MCF 10A (cell line): ENCODE measurements at regions of chr18 and their contacts with region 1.

Region 1: GRCh38 chr18:46281185-46282176 is 177.3 kb downstream of the HAUS1 start:
- DNase-seq: peak; percentile 81
- H3K4me3 Mint-ChIP-seq: no peak overlapping the region
- H3K27ac Mint-ChIP-seq: no peak overlapping the region
- H3K4me1 Mint-ChIP-seq: peaks cover 25% of the 10 kb centered on the region
- H3K27me3 Mint-ChIP-seq: no peaks in the 10 kb centered on the region
- CTCF ChIP-seq: peak; percentile 89

Region 2: DNA sequence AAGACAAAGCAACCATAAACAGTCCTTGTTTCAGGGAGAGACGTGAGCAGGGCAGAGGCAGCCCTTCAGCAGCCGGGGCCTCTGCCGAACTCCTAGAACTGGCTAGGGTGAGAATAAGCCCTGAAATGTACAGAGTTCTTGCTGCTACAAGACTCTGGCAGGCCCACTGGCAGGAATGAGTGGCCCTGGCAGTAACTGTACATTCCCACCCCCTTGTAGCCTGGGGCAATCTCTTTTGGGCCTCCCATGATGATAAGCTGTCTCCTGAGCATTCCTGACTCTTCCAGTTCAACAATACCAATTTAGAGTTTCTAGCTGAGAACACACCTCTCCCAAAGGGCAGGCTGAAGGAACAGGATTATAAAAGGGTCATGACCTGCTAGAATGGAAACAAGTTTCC is 123.0 kb before region 1 on chr18:
- CTCF ChIA-PET with region 1: interaction called, 12 read pairs
- POLR2A ChIA-PET with region 1: no interaction called
- intact Hi-C with region 1: no loop called
- DNase-seq: peak; percentile 61
- H3K4me3 Mint-ChIP-seq: no peak overlapping the region
- H3K27ac Mint-ChIP-seq: no peak overlapping the region
- H3K4me1 Mint-ChIP-seq: peaks cover 15% of the 10 kb centered on the region
- H3K27me3 Mint-ChIP-seq: no peaks in the 10 kb centered on the region
- CTCF ChIP-seq: no peak

Region 3: GRCh38 chr18:46324087-46324958 is 42.8 kb after region 1 on chr18:
- CTCF ChIA-PET with region 1: interaction called, 5 read pairs
- POLR2A ChIA-PET with region 1: no interaction called
- intact Hi-C with region 1: loop called (anchors 2 kb)
- DNase-seq: peak; percentile 79
- H3K4me3 Mint-ChIP-seq: peak overlapping the region; percentile 48
- H3K27ac Mint-ChIP-seq: peak overlapping the region; percentile 67
- H3K4me1 Mint-ChIP-seq: peaks cover 36% of the 10 kb centered on the region
- H3K27me3 Mint-ChIP-seq: no peaks in the 10 kb centered on the region
- CTCF ChIP-seq: no peak

Region 4: DNA sequence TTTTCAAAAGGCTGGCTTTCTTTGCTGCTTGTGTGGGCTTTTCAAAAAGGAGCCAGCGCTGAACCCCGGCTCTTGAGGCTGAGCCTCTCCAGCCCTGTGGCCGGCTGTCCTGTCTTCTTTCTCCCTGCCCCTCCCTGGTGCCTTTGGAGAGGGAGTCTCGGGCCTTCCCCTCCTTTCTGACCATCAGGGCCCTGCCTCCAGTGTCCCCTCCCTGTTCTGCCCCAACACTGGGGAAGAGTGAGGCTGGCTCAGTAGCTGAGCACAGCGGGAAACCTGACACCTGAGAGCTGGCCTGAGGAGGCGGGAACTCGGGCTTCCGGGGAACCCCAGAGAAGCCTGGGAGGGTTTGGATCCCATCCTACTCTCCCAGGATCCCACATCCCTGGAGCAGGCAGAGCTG is 143.4 kb after region 1 on chr18:
- CTCF ChIA-PET with region 1: no interaction called
- POLR2A ChIA-PET with region 1: no interaction called
- intact Hi-C with region 1: loop called (anchors 10 kb)
- DNase-seq: peak; percentile 63
- H3K4me3 Mint-ChIP-seq: no peak overlapping the region
- H3K27ac Mint-ChIP-seq: no peak overlapping the region
- H3K4me1 Mint-ChIP-seq: peaks cover 22% of the 10 kb centered on the region
- H3K27me3 Mint-ChIP-seq: no peaks in the 10 kb centered on the region
- CTCF ChIP-seq: no peak

Region 5: DNA sequence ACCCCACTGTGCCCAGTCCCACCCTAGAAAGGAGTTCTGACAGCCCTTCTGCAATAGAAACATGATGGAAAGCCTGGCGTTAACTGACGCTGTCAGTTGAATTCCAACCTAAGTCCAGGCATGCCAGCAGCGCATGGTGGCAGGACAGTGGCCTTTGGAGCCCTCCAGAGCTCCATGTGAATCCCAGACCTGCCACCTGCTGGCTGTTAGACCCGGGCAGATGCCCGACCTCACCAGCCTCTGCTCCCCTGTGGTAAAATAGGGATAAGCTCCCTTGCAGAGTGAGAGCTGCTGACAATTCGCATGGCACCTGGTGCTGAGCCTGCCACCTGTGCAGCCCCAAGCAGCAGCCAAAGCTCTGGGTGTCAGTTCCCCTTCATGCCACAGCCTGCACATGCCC is 237.0 kb after region 1 on chr18:
- CTCF ChIA-PET with region 1: interaction called, 20 read pairs
- POLR2A ChIA-PET with region 1: no interaction called
- intact Hi-C with region 1: loop called (anchors 1 kb)
- DNase-seq: peak; percentile 38
- H3K4me3 Mint-ChIP-seq: no peak overlapping the region
- H3K27ac Mint-ChIP-seq: no peak overlapping the region
- H3K4me1 Mint-ChIP-seq: no peaks in the 10 kb centered on the region
- H3K27me3 Mint-ChIP-seq: peaks cover 91% of the 10 kb centered on the region
- CTCF ChIP-seq: no peak

Region 6: DNA sequence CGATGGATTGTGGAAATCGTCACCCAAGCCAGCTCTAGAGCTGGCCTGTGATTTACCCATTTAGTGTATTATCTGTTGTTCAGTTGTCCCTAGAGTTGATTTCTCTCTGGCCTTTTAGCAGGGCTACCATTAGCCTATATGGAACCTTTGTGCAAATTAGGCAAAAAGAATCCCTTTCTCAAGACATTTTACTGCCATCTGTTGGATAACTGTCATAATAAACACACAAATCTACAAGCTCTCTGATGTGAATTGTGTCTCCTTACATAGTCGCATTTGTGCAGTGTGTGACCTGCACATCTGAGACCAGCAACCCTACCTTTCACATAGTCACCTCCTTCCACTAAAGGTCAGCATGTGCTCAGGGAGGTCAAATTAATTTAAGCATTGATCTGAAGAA is 341.5 kb after region 1 on chr18:
- CTCF ChIA-PET with region 1: interaction called, 181 read pairs
- POLR2A ChIA-PET with region 1: interaction called, 26 read pairs
- intact Hi-C with region 1: loop called (anchors 1 kb)
- DNase-seq: peak; percentile 19
- H3K4me3 Mint-ChIP-seq: no peak overlapping the region
- H3K27ac Mint-ChIP-seq: no peak overlapping the region
- H3K4me1 Mint-ChIP-seq: no peaks in the 10 kb centered on the region
- H3K27me3 Mint-ChIP-seq: peaks cover 16% of the 10 kb centered on the region
- CTCF ChIP-seq: peak; percentile 35

Region 7: GRCh38 chr18:46660955-46661749 is 379.7 kb after region 1 on chr18:
- CTCF ChIA-PET with region 1: interaction called, 224 read pairs
- POLR2A ChIA-PET with region 1: interaction called, 3 read pairs
- intact Hi-C with region 1: loop called (anchors 1 kb)
- DNase-seq: no peak
- H3K4me3 Mint-ChIP-seq: no peak overlapping the region
- H3K27ac Mint-ChIP-seq: no peak overlapping the region
- H3K4me1 Mint-ChIP-seq: peaks cover 10% of the 10 kb centered on the region
- H3K27me3 Mint-ChIP-seq: peaks cover 2% of the 10 kb centered on the region
- CTCF ChIP-seq: no peak